ENCODE measurements at regions of chr10 and their contacts with region 1.

Region 1: DNA sequence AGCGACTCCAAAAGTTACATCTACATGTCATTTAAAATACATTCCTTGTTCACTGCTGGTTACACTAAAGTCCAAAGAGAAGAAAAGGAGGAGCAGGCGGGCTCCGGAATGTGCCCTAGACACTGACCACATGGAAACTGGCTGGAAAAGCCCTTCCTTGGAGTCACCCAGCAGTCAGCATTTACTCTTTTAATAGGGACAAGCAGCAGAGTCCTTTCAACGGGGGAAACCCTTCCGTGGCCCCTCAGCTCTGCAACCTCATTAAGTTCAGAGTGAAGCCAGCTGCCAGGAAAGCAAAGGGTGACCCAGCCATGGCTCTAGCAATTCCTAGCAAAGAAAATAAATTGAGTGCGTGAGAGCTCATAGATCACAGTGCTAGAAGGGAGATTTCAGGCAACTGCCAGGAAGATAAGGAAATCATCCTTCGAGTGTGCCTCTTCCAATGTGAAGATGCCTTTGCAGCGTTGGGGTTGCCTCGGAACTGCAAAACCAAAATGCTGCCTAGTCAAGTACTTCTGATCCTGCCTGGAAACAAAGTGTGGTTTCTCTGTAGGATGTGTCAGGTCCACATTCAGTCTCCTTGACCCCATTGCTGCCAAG is 101.6 kb downstream of the SORBS1 start:
- DNase-seq: no peak
- H3K4me3 ChIP-seq: no peak overlapping the region
- H3K27me3 ChIP-seq: peaks cover 4% of the 10 kb centered on the region
- CTCF ChIP-seq: no peak

Region 2: GRCh38 chr10:95445837-95446486 is 13.6 kb before region 1 on chr10:
- CTCF ChIA-PET with region 1: interaction called, 26 read pairs
- POLR2A ChIA-PET with region 1: no interaction called
- DNase-seq: peak; percentile 18
- H3K4me3 ChIP-seq: no peak overlapping the region
- H3K27me3 ChIP-seq: no peaks in the 10 kb centered on the region
- CTCF ChIP-seq: peak; percentile 80